Gastrocnemius medialis (tissue), 4 donors: ENCODE measurements at regions of chr2 and their contacts with region 1.

Region 1: GRCh38 chr2:231706731-231707624 is 1.3 kb upstream of the PTMA start:
- DNase-seq: peak; percentile 99
- ATAC-seq: peak; percentile 54 to 58
- H3K4me3 ChIP-seq: peak overlapping the region; percentile 86 to 96 (median 90)
- H3K27ac ChIP-seq: peak overlapping the region; percentile 94 to 100 (median 96)
- H3K4me1 ChIP-seq: peaks cover 22% of the 10 kb centered on the region in 2 donors
- H3K27me3 ChIP-seq: no peaks in the 10 kb centered on the region
- CTCF ChIP-seq: peak; percentile 22 to 80 (median 73)
- POLR2A ChIP-seq: peak; percentile 81 to 85

Region 2: DNA sequence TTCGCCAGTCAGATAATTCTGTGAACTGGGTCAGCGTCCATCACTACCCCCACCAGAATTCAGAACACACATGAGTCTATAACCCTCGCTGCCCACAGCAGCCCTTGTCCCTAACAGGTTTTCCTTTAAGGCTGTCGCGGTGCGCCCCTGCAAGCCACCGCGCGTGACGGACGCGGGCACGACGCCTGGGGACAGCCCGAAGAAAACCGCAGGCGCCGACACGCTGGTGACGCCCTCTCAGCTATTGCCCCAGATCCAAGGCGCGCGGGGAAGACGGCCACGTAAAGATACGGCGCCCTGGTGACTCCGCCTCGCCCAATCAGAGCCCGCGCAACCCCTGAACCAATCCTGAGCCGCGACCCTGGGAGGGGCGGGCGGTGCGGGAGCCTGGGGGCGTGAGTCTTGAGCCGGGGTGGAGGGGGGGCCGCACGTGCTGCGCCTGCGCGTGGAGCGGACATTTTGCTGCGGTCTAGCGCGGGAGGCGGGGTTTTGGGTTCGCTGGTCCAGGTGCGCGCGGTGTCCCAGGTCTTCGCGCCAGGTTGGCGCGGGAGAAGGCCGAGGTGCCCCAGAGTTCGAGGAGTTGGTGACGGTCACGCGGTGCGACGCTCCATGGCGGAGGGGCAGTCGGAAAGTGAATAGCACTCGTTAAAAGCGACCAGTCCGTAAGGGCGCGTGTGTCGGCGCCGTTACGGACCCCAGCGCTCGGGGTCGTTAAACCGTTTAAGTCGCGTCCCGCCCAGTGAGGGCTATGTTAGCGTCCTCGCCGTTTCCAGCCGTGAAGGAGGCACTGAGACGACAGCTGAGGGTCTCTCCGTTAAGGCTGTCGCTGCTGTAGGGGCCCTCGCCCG is 192.7 kb before region 1 on chr2:
- in situ Hi-C with region 1: no loop called
- intact Hi-C with region 1: loop called (anchors 2 kb)
- DNase-seq: peak; percentile 98 to 99
- ATAC-seq: peak; percentile 93 to 95
- H3K4me3 ChIP-seq: peak overlapping the region; percentile 75 to 97 (median 89)
- H3K27ac ChIP-seq: peak overlapping the region; percentile 92 to 99 (median 96)
- H3K4me1 ChIP-seq: peaks cover 6 to 21% of the 10 kb centered on the region in 2 donors
- H3K27me3 ChIP-seq: no peaks in the 10 kb centered on the region
- CTCF ChIP-seq: no peak
- POLR2A ChIP-seq: peak; percentile 90 to 91

Region 3: GRCh38 chr2:231642631-231643494 is 64.1 kb before region 1 on chr2:
- in situ Hi-C with region 1: no loop called
- intact Hi-C with region 1: loop called (anchors 2 kb)
- DNase-seq: peak; percentile 94 to 97
- ATAC-seq: peak; percentile 82 to 84
- H3K4me3 ChIP-seq: peak overlapping the region; percentile 9 to 43 (median 28)
- H3K27ac ChIP-seq: peak overlapping the region; percentile 93 to 99 (median 96)
- H3K4me1 ChIP-seq: peaks cover 51 to 52% of the 10 kb centered on the region in 2 donors
- H3K27me3 ChIP-seq: no peaks in the 10 kb centered on the region
- CTCF ChIP-seq: no peak
- POLR2A ChIP-seq: peak; percentile 89 to 93

Region 4: GRCh38 chr2:231674587-231675338 is 32.2 kb before region 1 on chr2:
- in situ Hi-C with region 1: loop called in 1 of 4 experiments (anchors 5 kb)
- intact Hi-C with region 1: no loop called
- DNase-seq: peak in 1 of 2 donors; percentile 61
- ATAC-seq: peak; percentile 35 to 55
- H3K4me3 ChIP-seq: no peak overlapping the region
- H3K27ac ChIP-seq: peak overlapping the region; percentile 79 to 83 (median 81)
- H3K4me1 ChIP-seq: peaks cover 24 to 28% of the 10 kb centered on the region in 2 donors
- H3K27me3 ChIP-seq: no peaks in the 10 kb centered on the region
- CTCF ChIP-seq: peak; percentile 79 to 92 (median 92)
- POLR2A ChIP-seq: no peak

Region 5: GRCh38 chr2:231780909-231781797 is 74.2 kb after region 1 on chr2 and contains the start of gene PDE6D:
- in situ Hi-C with region 1: no loop called
- intact Hi-C with region 1: loop called (anchors 2 kb)
- DNase-seq: peak; percentile 97 to 99
- ATAC-seq: peak; percentile 98 to 99
- H3K4me3 ChIP-seq: peak within 1 kb of the TSS; percentile 75 to 99 (median 92)
- H3K27ac ChIP-seq: peak within 1 kb of the TSS; percentile 84 to 91 (median 90)
- H3K4me1 ChIP-seq: peaks cover 34 to 44% of the 10 kb centered on the region in 2 donors
- H3K27me3 ChIP-seq: no peaks in the 10 kb centered on the region
- CTCF ChIP-seq: no peak
- POLR2A ChIP-seq: peak; percentile 90 to 97
- total RNA-seq, gene PDE6D: 11.7 to 22.6 (median 17.6) TPM